ENCODE measurements at regions of chr1 and their contacts with region 1.

Region 1: GRCh38 chr1:51897699-51898031 is 19.1 kb upstream of the NRDC start:
- DNase-seq: peak; percentile 83
- H3K4me3 ChIP-seq: no peak overlapping the region
- H3K27ac ChIP-seq: peak overlapping the region; percentile 93
- H3K4me1 ChIP-seq: peaks cover 23% of the 10 kb centered on the region
- H3K27me3 ChIP-seq: no peaks in the 10 kb centered on the region
- CTCF ChIP-seq: no peak
- POLR2A ChIP-seq: no peak

Region 2: DNA sequence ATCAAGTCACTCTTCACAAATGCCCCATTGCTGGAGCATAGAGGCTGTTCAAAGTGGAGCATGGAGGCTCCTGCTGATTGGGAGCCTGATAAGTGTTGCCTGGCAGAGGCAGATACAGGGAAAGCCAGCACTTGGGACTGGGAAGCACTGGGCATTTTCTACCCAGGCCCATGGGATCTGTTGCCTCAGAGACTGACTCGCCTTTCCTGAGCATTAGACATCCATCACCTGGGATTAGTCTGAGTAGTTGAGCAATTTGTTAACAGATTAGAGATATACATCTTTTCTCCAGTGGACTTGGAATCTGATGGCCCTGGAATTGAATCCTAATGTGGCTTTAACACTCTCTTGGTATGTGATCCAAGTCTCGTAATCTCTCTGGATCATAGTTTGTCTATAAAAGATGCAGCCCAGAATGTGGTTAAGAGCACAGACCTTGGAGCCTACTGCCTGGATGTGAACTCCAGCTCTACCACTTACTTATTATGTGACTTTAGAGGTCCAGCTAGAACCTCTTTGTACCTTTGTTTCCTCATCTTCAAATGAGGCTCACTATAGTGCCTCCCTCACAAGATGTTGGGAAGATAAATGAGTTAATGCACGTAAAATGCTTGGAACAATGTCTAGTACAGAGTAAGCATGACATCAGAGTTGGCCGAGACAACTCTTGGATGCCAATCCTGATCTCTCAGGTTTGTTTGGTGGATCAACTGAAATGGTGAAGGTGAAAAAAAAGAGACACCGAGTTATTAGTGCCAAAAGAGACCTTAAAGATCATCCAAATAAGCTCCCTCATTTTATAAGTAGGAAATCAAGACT is 19.1 kb after region 1 on chr1:
- CTCF ChIA-PET with region 1: interaction called, 31 read pairs
- POLR2A ChIA-PET with region 1: no interaction called
- dilution Hi-C with region 1: no loop called
- intact Hi-C with region 1: no loop called
- DNase-seq: no peak
- H3K4me3 ChIP-seq: no peak overlapping the region
- H3K27ac ChIP-seq: no peak overlapping the region
- H3K4me1 ChIP-seq: peaks cover 12% of the 10 kb centered on the region
- H3K27me3 ChIP-seq: no peaks in the 10 kb centered on the region
- CTCF ChIP-seq: no peak
- POLR2A ChIP-seq: no peak

Region 3: DNA sequence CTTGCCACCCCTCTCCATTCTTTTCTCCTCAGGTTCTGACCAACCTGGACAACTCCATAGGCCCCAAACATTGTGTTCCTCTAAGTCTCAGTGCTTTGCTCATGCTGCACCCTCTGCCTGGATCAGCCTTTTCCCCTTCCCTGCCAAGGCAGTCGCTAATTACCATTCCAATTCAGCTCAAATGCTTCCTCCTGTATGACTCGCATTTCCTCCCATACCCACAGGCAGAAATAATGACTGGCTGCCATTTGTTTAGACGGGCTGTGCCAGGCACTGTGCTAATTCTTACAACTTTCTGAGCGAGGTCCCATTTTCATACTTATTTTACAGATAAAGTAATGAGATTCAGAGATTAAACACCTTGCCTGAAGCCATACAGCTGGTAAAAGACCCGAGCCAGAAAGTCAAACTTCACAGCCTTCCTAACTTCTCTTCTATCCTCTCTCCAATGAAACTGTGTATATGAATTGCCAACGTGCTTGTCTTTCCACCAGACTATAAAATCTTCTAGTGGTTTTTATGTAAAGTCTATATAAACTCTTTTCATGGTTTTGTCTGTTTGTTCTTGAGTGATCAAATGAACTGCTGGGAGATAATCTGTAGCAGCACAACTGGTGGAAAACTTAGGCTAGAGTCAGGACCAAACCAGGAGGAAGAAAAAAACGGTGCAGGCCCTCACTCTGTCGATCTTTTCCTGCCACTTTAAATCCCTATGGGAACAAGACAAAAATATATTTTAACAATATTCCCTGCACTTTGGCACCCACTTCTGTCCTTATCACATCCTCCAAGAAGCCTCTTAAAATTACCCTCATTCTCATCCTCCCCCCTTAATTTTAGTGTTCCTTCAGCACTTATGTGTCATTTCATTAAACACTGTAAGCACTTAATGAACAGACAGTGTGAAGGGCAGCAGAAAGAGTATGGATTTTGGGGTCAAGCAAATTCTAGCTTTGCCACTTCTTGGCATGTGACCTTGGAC is 59.2 kb after region 1 on chr1:
- CTCF ChIA-PET with region 1: interaction called, 4 read pairs
- POLR2A ChIA-PET with region 1: no interaction called
- dilution Hi-C with region 1: no loop called
- intact Hi-C with region 1: loop called (anchors 2 kb)
- DNase-seq: peak; percentile 56
- H3K4me3 ChIP-seq: no peak overlapping the region
- H3K27ac ChIP-seq: no peak overlapping the region
- H3K4me1 ChIP-seq: peaks cover 8% of the 10 kb centered on the region
- H3K27me3 ChIP-seq: no peaks in the 10 kb centered on the region
- CTCF ChIP-seq: no peak
- POLR2A ChIP-seq: no peak

Region 4: DNA sequence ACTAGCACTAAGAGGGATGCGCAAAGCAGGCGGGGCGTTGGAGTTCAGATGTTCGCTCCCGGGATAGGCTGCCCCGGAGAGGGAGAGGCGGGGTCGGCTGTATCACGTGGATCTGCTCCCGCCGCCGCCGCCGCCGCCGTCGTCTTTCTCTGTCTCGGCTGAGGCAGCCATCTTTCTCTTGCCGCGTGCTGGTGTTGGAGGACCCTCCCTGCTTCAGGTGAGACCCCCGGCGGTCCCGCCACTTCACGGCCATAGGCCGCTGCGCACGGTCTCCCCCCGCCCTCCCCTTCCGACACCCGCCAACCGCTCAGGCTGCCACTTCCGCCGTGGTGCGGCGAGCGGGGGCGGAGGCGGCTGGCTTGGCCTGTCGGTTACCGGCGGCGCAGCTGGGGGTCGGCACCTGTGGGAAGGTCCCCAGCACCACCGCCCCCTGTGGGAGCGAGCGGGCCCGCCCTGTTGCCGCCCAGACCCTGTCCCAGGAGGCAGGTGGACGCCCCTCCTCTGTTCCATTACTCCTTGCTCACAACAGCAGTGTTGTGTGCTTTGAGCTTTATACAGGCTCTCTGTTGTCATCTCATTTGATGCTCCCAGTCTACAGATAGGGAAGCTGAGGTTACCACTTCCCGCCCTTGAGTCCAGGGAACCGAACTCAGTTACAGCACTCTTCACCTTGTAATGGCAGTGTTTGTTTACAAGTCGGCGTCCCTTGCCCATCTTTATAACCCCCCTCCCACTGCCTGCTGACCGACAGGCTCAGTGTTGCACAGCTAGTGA is 158.7 kb after region 1 on chr1 and contains the start of gene BTF3L4:
- CTCF ChIA-PET with region 1: interaction called, 4 read pairs
- POLR2A ChIA-PET with region 1: no interaction called
- dilution Hi-C with region 1: no loop called
- intact Hi-C with region 1: loop called (anchors 2 kb)
- DNase-seq: peak; percentile 89
- H3K4me3 ChIP-seq: peak within 1 kb of the TSS; percentile 62 to 93 (median 92)
- H3K27ac ChIP-seq: peak within 1 kb of the TSS; percentile 75
- H3K4me1 ChIP-seq: peaks cover 24% of the 10 kb centered on the region
- H3K27me3 ChIP-seq: no peaks in the 10 kb centered on the region
- CTCF ChIP-seq: no peak
- POLR2A ChIP-seq: peak; percentile 52
- total RNA-seq, gene BTF3L4: 43.2 and 45.6 TPM in 2 replicates

Region 5: DNA sequence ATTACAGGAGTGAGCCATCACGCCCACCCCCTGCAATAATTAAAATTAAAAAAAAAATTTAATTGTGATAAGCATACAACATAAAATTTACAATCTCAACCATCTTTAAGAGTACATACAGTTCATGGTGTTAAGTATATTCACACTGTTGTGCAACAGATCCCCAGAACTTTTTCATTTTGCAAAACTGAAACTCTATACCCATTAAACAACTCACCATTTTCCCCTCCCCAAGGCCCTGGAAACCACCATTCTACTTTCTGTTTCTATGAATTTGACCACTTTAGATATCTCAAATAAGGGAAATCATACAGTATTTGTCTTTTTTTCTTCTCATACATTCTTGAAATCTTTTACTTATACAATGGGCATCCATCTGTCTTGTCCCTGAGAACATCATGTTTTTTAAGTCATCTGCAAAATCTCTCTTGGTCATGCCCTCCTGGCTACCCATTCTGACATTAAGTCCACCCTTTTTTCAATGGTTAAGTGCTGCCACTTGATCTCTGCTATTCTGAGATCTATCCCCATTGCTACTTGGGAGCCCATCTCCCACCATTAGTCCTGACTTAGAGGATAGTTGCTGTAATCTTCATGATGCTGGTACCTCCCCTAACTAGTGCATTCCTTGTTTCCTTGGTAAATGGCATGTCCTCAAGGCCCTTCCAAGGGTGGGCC is 204.8 kb after region 1 on chr1:
- CTCF ChIA-PET with region 1: no interaction called
- POLR2A ChIA-PET with region 1: no interaction called
- dilution Hi-C with region 1: no loop called
- intact Hi-C with region 1: no loop called
- DNase-seq: no peak
- H3K4me3 ChIP-seq: no peak overlapping the region
- H3K27ac ChIP-seq: no peak overlapping the region
- H3K4me1 ChIP-seq: no peaks in the 10 kb centered on the region
- H3K27me3 ChIP-seq: peaks cover 0 to 4% of the 10 kb centered on the region in 2 experiments
- CTCF ChIP-seq: no peak
- POLR2A ChIP-seq: no peak

Region 6: GRCh38 chr1:52296345-52296744 is 398.7 kb after region 1 on chr1:
- CTCF ChIA-PET with region 1: interaction called, 3 read pairs
- POLR2A ChIA-PET with region 1: no interaction called
- dilution Hi-C with region 1: no loop called
- intact Hi-C with region 1: loop called (anchors 1 kb)
- DNase-seq: peak; percentile 78
- H3K4me3 ChIP-seq: no peak overlapping the region
- H3K27ac ChIP-seq: no peak overlapping the region
- H3K4me1 ChIP-seq: no peaks in the 10 kb centered on the region
- H3K27me3 ChIP-seq: no peaks in the 10 kb centered on the region
- CTCF ChIP-seq: peak; percentile 60 to 65
- POLR2A ChIP-seq: no peak

Region 7: GRCh38 chr1:52697795-52698674 is 800.4 kb after region 1 on chr1 and contains the start of gene COA7:
- CTCF ChIA-PET with region 1: no interaction called
- POLR2A ChIA-PET with region 1: no interaction called
- dilution Hi-C with region 1: no loop called
- intact Hi-C with region 1: loop called (anchors 5 kb)
- DNase-seq: peak; percentile 88
- H3K4me3 ChIP-seq: peak within 1 kb of the TSS; percentile 30 to 72 (median 65)
- H3K27ac ChIP-seq: peak within 1 kb of the TSS; percentile 56
- H3K4me1 ChIP-seq: peaks cover 13% of the 10 kb centered on the region
- H3K27me3 ChIP-seq: no peaks in the 10 kb centered on the region
- CTCF ChIP-seq: no peak
- POLR2A ChIP-seq: peak; percentile 85
- total RNA-seq, gene COA7: 28.6 and 30.6 TPM in 2 replicates

Measured in endothelial cell of umbilical vein (primary cell).